Astrocyte of the cerebellum (primary cell): ENCODE measurements at regions of chr5 and their contacts with region 1.

Region 1: GRCh38 chr5:96582343-96582742 is 79.8 kb upstream of the CAST start:
- DNase-seq: peak; percentile 47
- H3K4me3 ChIP-seq: no peak overlapping the region
- CTCF ChIP-seq: no peak

Region 2: GRCh38 chr5:96522635-96523355 is 59.5 kb before region 1 on chr5:
- in situ Hi-C with region 1: loop called (anchors 5 kb)
- DNase-seq: no peak
- H3K4me3 ChIP-seq: no peak overlapping the region
- CTCF ChIP-seq: no peak